ENCODE measurements at regions of chr15 and their contacts with region 1.

Region 1: GRCh38 chr15:94412979-94413746 is 181.8 kb downstream of the MCTP2 start:
- DNase-seq: peak; percentile 67
- H3K4me3 ChIP-seq: no peak overlapping the region
- H3K27ac ChIP-seq: peak overlapping the region in 1 of 4 donors; percentile 41
- H3K4me1 ChIP-seq: peaks cover 0 to 37% (median 15%) of the 10 kb centered on the region in 4 donors
- H3K27me3 ChIP-seq: no peaks in the 10 kb centered on the region
- CTCF ChIP-seq: peak; percentile 46 to 57 (median 53)
- EP300 ChIP-seq: no peak
- POLR2A ChIP-seq: no peak

Region 2: GRCh38 chr15:95291898-95292472 is 878.8 kb after region 1 on chr15:
- in situ Hi-C with region 1: loop called in 1 of 4 experiments (anchors 25 kb)
- intact Hi-C with region 1: no loop called
- DNase-seq: no peak
- H3K4me3 ChIP-seq: no peak overlapping the region
- H3K27ac ChIP-seq: no peak overlapping the region
- H3K4me1 ChIP-seq: peaks cover 0 to 17% (median 0%) of the 10 kb centered on the region in 4 donors
- H3K27me3 ChIP-seq: no peaks in the 10 kb centered on the region
- CTCF ChIP-seq: peak; percentile 55 to 74 (median 61)
- EP300 ChIP-seq: no peak
- POLR2A ChIP-seq: no peak

Region 3: DNA sequence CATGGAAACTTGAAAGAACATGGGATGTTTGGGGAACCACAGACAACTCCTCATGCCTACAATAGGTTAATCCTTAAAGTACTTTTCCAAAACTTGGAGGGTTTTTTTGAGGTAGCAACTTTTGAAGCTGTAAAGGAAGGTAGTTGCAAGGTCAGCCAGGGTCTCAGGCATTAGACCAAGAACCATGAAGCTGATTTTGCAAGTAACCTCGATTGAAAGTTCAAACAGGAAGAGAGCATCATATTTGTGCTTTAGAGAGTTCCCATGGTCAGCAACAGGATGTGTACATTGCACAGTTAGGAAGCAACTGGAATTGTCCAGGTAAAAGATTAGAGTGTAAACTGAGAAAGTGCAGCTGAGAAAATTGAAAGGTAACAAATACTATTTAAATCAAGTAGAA is 1717.6 kb after region 1 on chr15:
- in situ Hi-C with region 1: no loop called
- intact Hi-C with region 1: no loop called
- DNase-seq: no peak
- H3K4me3 ChIP-seq: no peak overlapping the region
- H3K27ac ChIP-seq: no peak overlapping the region
- H3K4me1 ChIP-seq: no peaks in the 10 kb centered on the region
- H3K27me3 ChIP-seq: no peaks in the 10 kb centered on the region
- CTCF ChIP-seq: no peak
- EP300 ChIP-seq: no peak
- POLR2A ChIP-seq: no peak

Measured in transverse colon (tissue), 4 donors.